HepG2 (cell line): ENCODE measurements at regions of chr2 and their contacts with region 1.

Region 1: DNA sequence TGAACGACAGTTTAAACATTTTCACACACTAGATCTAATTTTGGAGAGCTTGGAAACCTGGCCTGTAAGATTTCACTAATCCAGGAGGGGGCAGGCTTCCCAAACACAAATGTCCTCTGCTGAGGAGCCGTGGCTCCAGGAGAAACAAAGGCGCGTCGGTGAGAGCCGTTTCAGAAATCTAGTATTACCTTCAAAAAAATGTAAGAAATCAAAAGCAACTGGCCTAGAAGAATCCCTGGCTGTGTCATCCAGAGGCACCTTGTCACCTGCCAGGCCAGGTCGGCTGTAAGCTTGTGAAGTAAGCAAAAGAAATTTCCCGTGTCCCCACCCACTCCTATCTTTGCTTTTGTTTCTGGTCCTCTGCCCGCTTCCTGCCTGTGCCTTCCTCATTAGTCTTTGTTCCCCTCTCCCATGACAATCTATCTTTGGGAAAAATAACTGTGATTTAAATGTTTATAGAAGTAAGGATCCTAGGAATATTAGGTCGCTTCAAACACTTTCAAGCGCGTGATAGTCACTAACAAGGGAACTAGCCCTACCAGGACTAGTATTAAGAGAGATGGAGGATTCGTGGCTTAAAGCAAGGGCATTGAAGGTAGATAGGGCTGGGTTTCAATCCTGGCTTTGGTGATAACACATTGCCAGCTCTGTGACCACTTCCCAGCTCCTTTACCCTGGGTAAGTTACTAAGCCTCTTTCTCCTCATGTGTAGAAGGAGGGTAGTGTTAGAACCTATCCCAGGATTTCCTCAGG is 99.5 kb upstream of the STK39 start:
- DNase-seq: peak; percentile 62
- ATAC-seq: peak; percentile 86
- H3K4me3 ChIP-seq: peak overlapping the region; percentile 57 to 77 (median 74)
- H3K27ac ChIP-seq: no peak overlapping the region
- H3K4me1 ChIP-seq: peaks cover 7% of the 10 kb centered on the region
- H3K27me3 ChIP-seq: 0 out of 5 replicates have a peak, but pooled peaks cover 0 to under 1% of the 10 kb centered on the region in 2 experiments
- CTCF ChIP-seq: peak; percentile 90
- EP300 ChIP-seq: no peak
- POLR2A ChIP-seq: no peak
- RAD21 ChIP-seq: peak; percentile 91

Region 2: GRCh38 chr2:168490015-168490874 is 143.3 kb after region 1 on chr2:
- CTCF ChIA-PET with region 1: interaction called, 3 read pairs
- POLR2A ChIA-PET with region 1: no interaction called
- in situ Hi-C with region 1: no loop called
- intact Hi-C with region 1: loop called (anchors 1 kb)
- DNase-seq: peak; percentile 70
- ATAC-seq: peak; percentile 78
- H3K4me3 ChIP-seq: peak overlapping the region; percentile 42 to 55 (median 43)
- H3K27ac ChIP-seq: peak overlapping the region; percentile 70
- H3K4me1 ChIP-seq: peaks cover 67% of the 10 kb centered on the region
- H3K27me3 ChIP-seq: no peaks in the 10 kb centered on the region
- CTCF ChIP-seq: no peak
- EP300 ChIP-seq: 0 out of 4 replicates have a peak, but pooled peaks of 1 of the 2 experiments have one; percentile 21
- POLR2A ChIP-seq: 0 out of 4 replicates have a peak, but pooled peaks of 1 of the 2 experiments have one; percentile 28
- RAD21 ChIP-seq: no peak

Region 3: DNA sequence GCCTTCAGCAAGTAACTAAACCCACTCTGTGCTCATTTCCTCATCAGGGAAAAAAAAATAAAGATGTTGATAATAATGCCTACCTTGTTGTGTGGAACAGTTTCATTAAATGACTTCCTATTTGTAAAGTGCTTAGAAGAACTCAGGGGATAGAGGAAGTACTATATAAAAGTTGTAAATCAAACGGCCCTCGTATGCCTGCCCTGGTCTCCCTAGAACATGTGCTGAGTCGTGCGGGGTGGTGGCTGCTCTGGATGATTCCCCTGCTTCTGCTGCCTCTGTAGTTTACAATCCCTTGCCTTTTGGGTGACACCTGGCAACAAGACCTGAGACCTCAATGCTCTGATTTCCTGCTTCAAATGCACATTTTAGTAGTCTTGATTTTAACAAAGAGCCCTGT is 279.2 kb after region 1 on chr2:
- CTCF ChIA-PET with region 1: no interaction called
- POLR2A ChIA-PET with region 1: no interaction called
- in situ Hi-C with region 1: no loop called
- intact Hi-C with region 1: loop called (anchors 5 kb)
- DNase-seq: no peak
- ATAC-seq: no peak
- H3K4me3 ChIP-seq: no peak overlapping the region
- H3K27ac ChIP-seq: no peak overlapping the region
- H3K4me1 ChIP-seq: peaks cover 18% of the 10 kb centered on the region
- H3K27me3 ChIP-seq: no peaks in the 10 kb centered on the region
- CTCF ChIP-seq: no peak
- EP300 ChIP-seq: no peak
- POLR2A ChIP-seq: no peak
- RAD21 ChIP-seq: no peak

Region 4: GRCh38 chr2:168705534-168706470 is 358.9 kb after region 1 on chr2:
- CTCF ChIA-PET with region 1: interaction called, 20 read pairs
- POLR2A ChIA-PET with region 1: no interaction called
- in situ Hi-C with region 1: loop called (anchors 5 kb)
- intact Hi-C with region 1: loop called (anchors 1 kb)
- DNase-seq: peak; percentile 12
- ATAC-seq: 0 out of 3 replicates have a peak, but pooled peaks have one; percentile 38
- H3K4me3 ChIP-seq: no peak overlapping the region
- H3K27ac ChIP-seq: no peak overlapping the region
- H3K4me1 ChIP-seq: no peaks in the 10 kb centered on the region
- H3K27me3 ChIP-seq: no peaks in the 10 kb centered on the region
- CTCF ChIP-seq: peak; percentile 50
- EP300 ChIP-seq: no peak
- POLR2A ChIP-seq: no peak
- RAD21 ChIP-seq: no peak

Region 5: GRCh38 chr2:168849610-168850009 is 502.7 kb after region 1 on chr2:
- CTCF ChIA-PET with region 1: interaction called, 3 read pairs
- POLR2A ChIA-PET with region 1: no interaction called
- in situ Hi-C with region 1: no loop called
- intact Hi-C with region 1: loop called (anchors 2 kb)
- DNase-seq: peak; percentile 73
- ATAC-seq: peak; percentile 97
- H3K4me3 ChIP-seq: no peak overlapping the region
- H3K27ac ChIP-seq: no peak overlapping the region
- H3K4me1 ChIP-seq: peaks cover 14% of the 10 kb centered on the region
- H3K27me3 ChIP-seq: no peaks in the 10 kb centered on the region
- CTCF ChIP-seq: peak; percentile 77
- EP300 ChIP-seq: peak in 1 of 2 experiments; percentile 39; a peak in 1 of 4 replicates
- POLR2A ChIP-seq: no peak
- RAD21 ChIP-seq: peak; percentile 57; the same call in 1 of the 2 replicates